PC-3 (cell line): ENCODE measurements at regions of chr1 and their contacts with region 1.

Region 1: DNA sequence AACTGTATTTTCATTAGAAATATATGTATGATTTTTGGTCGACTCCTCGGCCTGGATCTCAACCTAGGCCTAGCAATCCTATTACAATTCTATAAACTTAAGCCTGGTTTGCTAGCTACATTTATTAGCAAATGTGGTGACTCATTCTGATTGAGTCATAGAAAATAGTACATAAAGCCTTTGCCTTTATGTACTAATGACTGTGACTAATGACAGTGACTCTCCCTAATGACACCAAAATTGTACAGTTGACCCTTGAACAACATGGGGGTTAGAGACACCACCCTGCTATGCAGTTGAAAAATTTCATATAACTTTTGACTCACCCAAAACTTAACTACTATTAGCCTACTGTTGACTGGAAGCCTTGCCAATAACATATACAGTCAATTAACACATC is 78.9 kb downstream of the CLEC20A start:
- DNase-seq: peak; percentile 96
- ATAC-seq: peak; percentile 98
- H3K4me3 ChIP-seq: no peak overlapping the region
- H3K27ac ChIP-seq: peak overlapping the region; percentile 81
- H3K4me1 ChIP-seq: peaks cover 16% of the 10 kb centered on the region
- H3K27me3 ChIP-seq: no peaks in the 10 kb centered on the region
- CTCF ChIP-seq: no peak

Region 2: GRCh38 chr1:178344513-178345082 is 73.3 kb before region 1 on chr1:
- CTCF ChIA-PET with region 1: no interaction called
- POLR2A ChIA-PET with region 1: no interaction called
- intact Hi-C with region 1: loop called (anchors 10 kb)
- DNase-seq: peak; percentile 66
- ATAC-seq: peak; percentile 37
- H3K4me3 ChIP-seq: peak overlapping the region; percentile 28; the same call in 1 of the 2 replicates
- H3K27ac ChIP-seq: peak overlapping the region; percentile 27
- H3K4me1 ChIP-seq: peaks cover 36% of the 10 kb centered on the region
- H3K27me3 ChIP-seq: no peaks in the 10 kb centered on the region
- CTCF ChIP-seq: peak; percentile 70

Region 3: DNA sequence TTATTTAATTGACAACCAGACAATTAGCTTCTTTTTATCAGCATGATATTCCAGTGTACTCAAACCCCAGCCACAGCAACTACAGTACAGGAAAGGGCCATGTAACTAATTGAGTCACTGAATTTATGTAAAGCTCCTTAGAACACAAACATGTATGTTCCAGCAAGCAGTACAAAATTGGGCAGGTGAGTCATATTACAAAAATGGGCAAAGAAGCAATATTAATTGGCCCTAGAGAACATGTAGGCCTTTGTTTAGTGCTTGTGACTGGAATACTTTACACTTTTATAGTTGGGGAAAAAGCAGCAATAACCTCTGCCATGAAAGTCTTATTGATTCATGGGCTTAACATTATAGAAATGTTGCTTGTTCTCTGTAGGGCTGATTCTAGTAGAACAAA is 47.2 kb after region 1 on chr1:
- CTCF ChIA-PET with region 1: no interaction called
- POLR2A ChIA-PET with region 1: no interaction called
- intact Hi-C with region 1: loop called (anchors 5 kb)
- DNase-seq: peak; percentile 36
- ATAC-seq: peak; percentile 79
- H3K4me3 ChIP-seq: no peak overlapping the region
- H3K27ac ChIP-seq: no peak overlapping the region
- H3K4me1 ChIP-seq: peaks cover 4% of the 10 kb centered on the region
- H3K27me3 ChIP-seq: no peaks in the 10 kb centered on the region
- CTCF ChIP-seq: no peak